Activated CD8-positive, alpha-beta T cell treated with anti-CD3 and anti-CD28 coated beads for 36 hours (primary cell): ENCODE measurements at regions of chr2 and their contacts with region 1.

Region 1: DNA sequence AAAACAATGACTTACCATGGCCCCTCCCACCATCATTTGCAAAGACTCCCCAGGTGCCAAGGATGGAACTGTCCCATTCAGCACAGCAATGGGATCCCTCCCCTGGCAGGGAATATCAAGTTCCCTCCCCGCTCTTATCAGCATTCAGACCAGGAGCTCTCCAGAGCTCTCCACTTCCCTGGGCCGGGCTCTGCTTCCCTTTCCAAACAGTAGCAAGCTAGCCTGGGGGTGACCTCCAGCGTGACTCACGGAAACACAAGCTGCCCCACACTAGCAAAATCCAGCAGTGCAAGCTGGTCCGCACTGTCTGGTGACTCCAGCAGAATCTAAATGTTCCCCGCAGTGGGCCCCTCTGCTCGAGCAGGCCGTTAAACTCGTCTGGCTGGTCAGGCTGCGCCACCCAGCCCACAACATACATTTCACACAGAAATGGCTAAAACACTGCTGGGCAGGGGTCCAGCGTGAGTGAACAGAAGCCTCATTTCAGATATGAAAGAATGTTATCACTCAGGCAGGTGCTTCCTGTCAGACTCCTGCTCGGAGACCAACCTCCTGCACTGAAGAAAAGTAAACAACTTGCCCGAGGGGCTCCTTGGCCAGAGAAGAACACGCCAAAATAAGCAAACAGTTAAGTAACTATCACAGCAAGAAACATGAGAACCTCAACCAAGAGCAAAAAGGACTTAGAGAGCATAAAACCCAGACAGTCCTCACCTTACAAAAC is 33.9 kb downstream of the STAT1 start:
- DNase-seq: no peak
- ATAC-seq: no peak
- H3K4me3 Mint-ChIP-seq: no peak overlapping the region
- H3K27ac Mint-ChIP-seq: peak overlapping the region; percentile 87
- H3K4me1 Mint-ChIP-seq: peaks cover 65% of the 10 kb centered on the region
- H3K27me3 Mint-ChIP-seq: no peaks in the 10 kb centered on the region
- CTCF ChIP-seq: no peak

Region 2: GRCh38 chr2:190891372-190891771 is 88.7 kb before region 1 on chr2:
- CTCF ChIA-PET with region 1: no interaction called
- POLR2A ChIA-PET with region 1: no interaction called
- intact Hi-C with region 1: no loop called
- DNase-seq: no peak
- ATAC-seq: no peak
- H3K4me3 Mint-ChIP-seq: no peak overlapping the region
- H3K27ac Mint-ChIP-seq: peak overlapping the region; percentile 26
- H3K4me1 Mint-ChIP-seq: peaks cover 71% of the 10 kb centered on the region
- H3K27me3 Mint-ChIP-seq: no peaks in the 10 kb centered on the region
- CTCF ChIP-seq: no peak

Region 3: GRCh38 chr2:190968522-190968921 is 11.5 kb before region 1 on chr2:
- CTCF ChIA-PET with region 1: interaction called, 4 read pairs
- POLR2A ChIA-PET with region 1: interaction called, 10 read pairs
- intact Hi-C with region 1: no loop called
- DNase-seq: no peak
- ATAC-seq: no peak
- H3K4me3 Mint-ChIP-seq: no peak overlapping the region
- H3K27ac Mint-ChIP-seq: peak overlapping the region; percentile 79
- H3K4me1 Mint-ChIP-seq: peaks cover 39% of the 10 kb centered on the region
- H3K27me3 Mint-ChIP-seq: no peaks in the 10 kb centered on the region
- CTCF ChIP-seq: no peak

Region 4: GRCh38 chr2:190996338-190996946 is 16.4 kb after region 1 on chr2:
- CTCF ChIA-PET with region 1: interaction called, 4 read pairs
- POLR2A ChIA-PET with region 1: interaction called, 121 read pairs
- intact Hi-C with region 1: no loop called
- DNase-seq: peak; percentile 42
- ATAC-seq: peak; percentile 49
- H3K4me3 Mint-ChIP-seq: no peak overlapping the region
- H3K27ac Mint-ChIP-seq: peak overlapping the region; percentile 65
- H3K4me1 Mint-ChIP-seq: peaks cover 58% of the 10 kb centered on the region
- H3K27me3 Mint-ChIP-seq: no peaks in the 10 kb centered on the region
- CTCF ChIP-seq: peak; percentile 41